ENCODE measurements at regions of chr4 and their contacts with region 1.

Region 1: DNA sequence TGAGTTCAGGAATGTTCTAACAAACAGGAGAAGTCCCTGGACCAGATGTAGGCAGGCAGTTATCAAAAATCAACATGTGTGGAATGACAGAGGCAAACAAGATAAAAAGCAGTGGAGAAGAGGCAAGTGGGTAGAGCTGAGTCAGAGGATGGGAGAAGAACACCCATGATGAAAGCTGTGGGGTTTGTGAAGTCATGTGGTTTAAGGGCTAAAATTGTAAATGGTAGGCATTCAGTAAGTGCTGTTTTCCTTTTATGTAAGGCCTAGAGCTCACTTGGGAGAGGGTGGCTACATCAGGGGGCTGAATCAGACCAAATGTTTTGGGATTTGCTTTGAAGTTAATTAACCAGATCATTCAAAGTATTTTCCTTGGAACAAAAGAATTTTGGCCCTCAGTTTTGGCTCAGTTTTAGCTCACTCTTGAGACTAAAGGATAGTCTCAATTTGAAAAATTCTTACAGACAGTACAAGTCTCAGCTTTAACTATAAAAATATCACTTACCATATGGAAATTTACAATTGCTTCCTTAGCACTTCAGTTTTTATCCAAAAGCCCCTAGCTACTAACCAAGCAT is 114.5 kb upstream of the PCDH7 start:
- DNase-seq: no peak
- ATAC-seq: no peak
- H3K4me3 ChIP-seq: no peak overlapping the region
- H3K4me3 Mint-ChIP-seq: no peak overlapping the region
- H3K27ac ChIP-seq: no peak overlapping the region
- H3K27ac Mint-ChIP-seq: no peak overlapping the region
- H3K4me1 ChIP-seq: no peaks in the 10 kb centered on the region
- H3K4me1 Mint-ChIP-seq: no peaks in the 10 kb centered on the region
- H3K27me3 ChIP-seq: no peaks in the 10 kb centered on the region
- H3K27me3 Mint-ChIP-seq: no peaks in the 10 kb centered on the region
- CTCF ChIP-seq: no peak

Region 2: GRCh38 chr4:30518211-30518610 is 87.5 kb before region 1 on chr4:
- CTCF ChIA-PET with region 1: no interaction called
- POLR2A ChIA-PET with region 1: no interaction called
- intact Hi-C with region 1: no loop called
- DNase-seq: no peak
- ATAC-seq: no peak
- H3K4me3 ChIP-seq: no peak overlapping the region
- H3K4me3 Mint-ChIP-seq: no peak overlapping the region
- H3K27ac ChIP-seq: no peak overlapping the region
- H3K27ac Mint-ChIP-seq: no peak overlapping the region
- H3K4me1 ChIP-seq: no peaks in the 10 kb centered on the region
- H3K4me1 Mint-ChIP-seq: no peaks in the 10 kb centered on the region
- H3K27me3 ChIP-seq: no peaks in the 10 kb centered on the region
- H3K27me3 Mint-ChIP-seq: no peaks in the 10 kb centered on the region
- CTCF ChIP-seq: no peak

Region 3: GRCh38 chr4:30616942-30617646 is 11.4 kb after region 1 on chr4:
- CTCF ChIA-PET with region 1: no interaction called
- POLR2A ChIA-PET with region 1: interaction called, 3 read pairs
- intact Hi-C with region 1: loop called in 1 of 2 experiments (anchors 1 kb)
- DNase-seq: no peak
- ATAC-seq: no peak
- H3K4me3 ChIP-seq: no peak overlapping the region
- H3K4me3 Mint-ChIP-seq: no peak overlapping the region
- H3K27ac ChIP-seq: no peak overlapping the region
- H3K27ac Mint-ChIP-seq: no peak overlapping the region
- H3K4me1 ChIP-seq: no peaks in the 10 kb centered on the region
- H3K4me1 Mint-ChIP-seq: no peaks in the 10 kb centered on the region
- H3K27me3 ChIP-seq: no peaks in the 10 kb centered on the region
- H3K27me3 Mint-ChIP-seq: no peaks in the 10 kb centered on the region
- CTCF ChIP-seq: no peak

Region 4: DNA sequence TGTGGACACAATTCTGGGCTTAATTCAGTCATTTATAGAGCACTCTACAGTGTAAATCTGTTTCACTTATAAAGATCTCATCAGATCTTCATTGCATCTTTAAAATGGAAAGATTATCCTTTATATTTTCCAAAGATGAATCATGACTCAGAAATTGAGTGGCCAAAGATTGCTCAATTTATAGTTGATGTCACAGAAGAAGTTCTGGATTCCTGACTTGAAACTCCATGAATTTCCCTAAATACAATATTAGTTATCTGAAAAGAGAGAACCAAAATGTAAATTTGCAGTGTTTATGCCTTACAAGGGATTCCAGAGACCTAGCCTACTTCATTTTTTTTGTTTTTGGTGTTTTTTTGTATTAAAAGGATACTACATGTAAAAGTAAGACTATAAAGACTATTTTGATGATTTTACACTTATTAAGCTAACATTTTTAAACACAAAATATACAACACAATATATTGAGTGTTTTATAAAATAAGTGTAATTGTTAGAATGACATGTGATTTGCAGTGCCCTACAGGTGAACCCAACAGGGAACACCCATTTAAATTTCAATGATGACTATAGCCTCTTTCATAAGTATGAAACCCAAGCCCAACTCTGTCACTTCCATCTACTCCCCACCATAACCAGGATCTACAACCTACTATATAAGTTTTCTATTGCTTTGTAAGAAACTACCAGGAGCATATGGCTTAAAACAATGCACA is 298.0 kb after region 1 on chr4:
- CTCF ChIA-PET with region 1: no interaction called
- POLR2A ChIA-PET with region 1: no interaction called
- intact Hi-C with region 1: no loop called
- DNase-seq: no peak
- ATAC-seq: no peak
- H3K4me3 ChIP-seq: no peak overlapping the region
- H3K4me3 Mint-ChIP-seq: no peak overlapping the region
- H3K27ac ChIP-seq: no peak overlapping the region
- H3K27ac Mint-ChIP-seq: no peak overlapping the region
- H3K4me1 ChIP-seq: no peaks in the 10 kb centered on the region
- H3K4me1 Mint-ChIP-seq: no peaks in the 10 kb centered on the region
- H3K27me3 ChIP-seq: no peaks in the 10 kb centered on the region
- H3K27me3 Mint-ChIP-seq: no peaks in the 10 kb centered on the region
- CTCF ChIP-seq: no peak

Measured in CD8-positive, alpha-beta T cell (primary cell).